Activated CD4-positive, alpha-beta memory T cell treated with anti-CD3 and anti-CD28 coated beads for 36 hours (primary cell): ENCODE measurements at regions of chr10 and their contacts with region 1.

Region 1: DNA sequence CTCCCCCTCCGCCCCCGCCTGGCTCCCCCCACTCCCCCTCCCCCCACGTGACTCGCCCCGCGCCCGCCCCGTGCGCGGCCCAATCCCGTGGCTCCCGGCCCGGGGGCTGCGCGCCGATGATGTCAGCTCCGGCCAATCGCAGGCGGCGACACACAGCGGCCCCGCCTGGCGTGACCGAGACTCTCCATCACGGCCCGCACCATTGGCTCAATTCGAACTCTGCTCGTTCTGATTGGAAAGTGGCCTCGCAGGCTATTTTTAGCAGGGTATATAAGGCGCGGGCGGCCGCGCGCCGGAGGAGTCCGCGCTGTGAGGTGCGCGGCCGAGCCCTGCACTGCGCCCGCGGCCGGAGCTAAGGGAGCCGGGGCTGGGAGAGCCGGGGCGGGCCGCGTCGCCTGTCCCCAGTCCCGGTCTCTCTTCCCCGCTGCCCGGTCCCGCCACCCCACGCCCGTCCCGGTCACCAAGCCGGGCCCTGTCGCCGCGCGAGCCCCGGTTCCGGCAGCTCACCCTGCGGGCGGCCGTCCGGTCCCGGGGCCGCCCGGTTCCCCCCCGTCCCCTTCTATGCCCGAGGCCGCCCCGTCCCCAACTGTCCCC is 345 bp upstream of the KLF6 start:
- DNase-seq: peak; percentile 100
- H3K4me3 Mint-ChIP-seq: peak overlapping the region; percentile 96
- H3K27ac Mint-ChIP-seq: peak overlapping the region; percentile 98
- H3K4me1 Mint-ChIP-seq: peaks cover 27% of the 10 kb centered on the region
- H3K27me3 Mint-ChIP-seq: peaks cover 2% of the 10 kb centered on the region

Region 2: DNA sequence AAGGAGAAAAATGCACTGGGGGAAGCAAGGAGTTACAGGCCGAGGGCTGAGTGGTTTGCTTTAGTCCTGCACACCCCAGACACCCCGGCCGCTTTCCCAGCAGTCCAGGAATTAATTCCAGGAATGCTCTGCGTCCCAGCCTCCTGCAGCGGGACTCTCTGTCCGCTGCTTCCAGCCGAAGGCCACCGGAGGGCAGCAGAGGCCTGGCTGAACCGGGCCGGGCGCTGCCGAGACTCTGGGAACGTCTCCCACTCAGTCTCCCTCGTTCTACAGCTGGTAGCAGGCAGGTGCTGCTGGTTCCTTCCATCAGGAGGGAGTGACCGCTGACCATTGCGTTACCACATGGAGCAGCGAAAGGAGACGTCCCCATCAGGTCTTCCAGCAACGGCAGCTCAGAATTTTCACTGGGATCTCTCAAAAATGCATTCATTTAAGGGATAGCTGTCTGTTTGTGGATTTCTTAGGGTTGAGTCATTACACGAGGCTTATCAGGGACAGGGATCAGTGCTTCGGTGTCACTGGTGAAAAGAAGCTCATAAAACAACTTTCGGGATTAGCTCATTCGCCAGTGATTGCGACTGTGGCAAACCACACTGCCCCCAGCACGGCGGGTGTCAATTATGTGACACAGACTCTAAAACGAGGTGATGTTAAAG is 587.9 kb before region 1 on chr10:
- CTCF ChIA-PET with region 1: interaction called, 8 read pairs
- POLR2A ChIA-PET with region 1: interaction called, 10 read pairs
- intact Hi-C with region 1: no loop called
- DNase-seq: peak; percentile 94
- H3K4me3 Mint-ChIP-seq: no peak overlapping the region
- H3K27ac Mint-ChIP-seq: no peak overlapping the region
- H3K4me1 Mint-ChIP-seq: peaks cover 11% of the 10 kb centered on the region
- H3K27me3 Mint-ChIP-seq: peaks cover 70% of the 10 kb centered on the region

Region 3: DNA sequence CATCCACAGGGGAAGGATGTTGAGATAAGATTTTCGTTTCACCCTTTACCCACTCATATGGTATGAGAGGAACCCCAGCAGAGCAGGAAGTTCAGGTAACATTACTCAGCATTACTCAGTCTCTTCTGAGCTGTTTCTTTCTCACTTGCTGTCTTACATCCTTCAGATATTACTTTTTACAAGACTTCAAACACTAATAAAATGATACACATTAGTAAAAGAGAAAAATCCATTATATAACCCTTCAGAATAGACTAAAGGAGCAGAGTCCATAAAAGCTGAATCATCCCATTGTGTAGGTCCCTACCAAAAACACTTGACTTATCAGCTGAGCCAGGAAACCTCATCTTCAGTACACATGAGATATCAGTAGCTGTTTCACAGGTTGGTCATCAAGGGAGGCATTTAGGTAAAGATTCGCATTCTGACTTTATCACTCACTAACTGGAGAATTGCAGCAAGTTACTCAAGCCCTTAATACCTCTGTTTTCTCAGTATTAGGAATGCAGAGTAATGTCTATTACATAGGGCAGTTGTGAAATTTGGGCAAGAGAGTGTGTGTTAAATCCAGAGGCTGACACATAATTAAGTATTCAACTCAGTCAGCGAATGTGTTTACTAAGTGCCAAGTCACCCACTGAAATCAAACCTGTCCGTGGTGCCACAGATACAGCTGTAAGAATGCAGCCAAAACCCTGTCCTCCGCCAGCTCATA is 45.0 kb before region 1 on chr10:
- CTCF ChIA-PET with region 1: interaction called, 4 read pairs
- POLR2A ChIA-PET with region 1: interaction called, 19 read pairs
- intact Hi-C with region 1: no loop called
- DNase-seq: peak; percentile 57
- H3K4me3 Mint-ChIP-seq: peak overlapping the region; percentile 43
- H3K27ac Mint-ChIP-seq: peak overlapping the region; percentile 82
- H3K4me1 Mint-ChIP-seq: peaks cover 28% of the 10 kb centered on the region
- H3K27me3 Mint-ChIP-seq: no peaks in the 10 kb centered on the region

Region 4: GRCh38 chr10:3828404-3829155 is 43.2 kb after region 1 on chr10:
- CTCF ChIA-PET with region 1: no interaction called
- POLR2A ChIA-PET with region 1: interaction called, 36 read pairs
- intact Hi-C with region 1: loop called (anchors 1 kb)
- DNase-seq: peak; percentile 70
- H3K4me3 Mint-ChIP-seq: peak overlapping the region; percentile 56
- H3K27ac Mint-ChIP-seq: peak overlapping the region; percentile 97
- H3K4me1 Mint-ChIP-seq: peaks cover 63% of the 10 kb centered on the region
- H3K27me3 Mint-ChIP-seq: no peaks in the 10 kb centered on the region

Region 5: GRCh38 chr10:3868271-3868664 is 82.9 kb after region 1 on chr10:
- CTCF ChIA-PET with region 1: interaction called, 3 read pairs
- POLR2A ChIA-PET with region 1: interaction called, 115 read pairs
- intact Hi-C with region 1: loop called (anchors 1 kb)
- DNase-seq: no peak
- H3K4me3 Mint-ChIP-seq: no peak overlapping the region
- H3K27ac Mint-ChIP-seq: peak overlapping the region; percentile 93
- H3K4me1 Mint-ChIP-seq: peaks cover 76% of the 10 kb centered on the region
- H3K27me3 Mint-ChIP-seq: no peaks in the 10 kb centered on the region

Region 6: DNA sequence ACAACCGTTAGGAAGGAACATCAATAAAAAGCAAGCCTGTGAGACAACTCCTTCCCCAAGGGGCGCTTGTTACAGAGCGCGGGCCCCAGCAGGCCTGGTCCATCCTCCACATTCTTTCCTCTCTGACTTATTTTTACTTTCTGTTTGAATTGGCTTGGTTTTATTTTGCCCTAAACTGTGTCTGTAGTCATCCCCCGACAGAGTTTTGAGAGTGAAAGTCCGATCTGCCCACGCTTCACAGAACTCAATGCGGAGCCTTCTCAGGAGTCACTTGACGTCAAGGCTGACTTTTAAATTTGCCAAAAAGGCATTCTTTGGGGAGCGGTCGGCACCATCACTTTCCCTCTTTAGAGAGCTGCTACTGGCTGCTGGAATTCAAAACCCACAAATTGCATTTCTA is 149.8 kb after region 1 on chr10:
- CTCF ChIA-PET with region 1: no interaction called
- POLR2A ChIA-PET with region 1: interaction called, 32 read pairs
- intact Hi-C with region 1: no loop called
- DNase-seq: peak; percentile 95
- H3K4me3 Mint-ChIP-seq: peak overlapping the region; percentile 42
- H3K27ac Mint-ChIP-seq: peak overlapping the region; percentile 92
- H3K4me1 Mint-ChIP-seq: peaks cover 49% of the 10 kb centered on the region
- H3K27me3 Mint-ChIP-seq: no peaks in the 10 kb centered on the region

Region 7: DNA sequence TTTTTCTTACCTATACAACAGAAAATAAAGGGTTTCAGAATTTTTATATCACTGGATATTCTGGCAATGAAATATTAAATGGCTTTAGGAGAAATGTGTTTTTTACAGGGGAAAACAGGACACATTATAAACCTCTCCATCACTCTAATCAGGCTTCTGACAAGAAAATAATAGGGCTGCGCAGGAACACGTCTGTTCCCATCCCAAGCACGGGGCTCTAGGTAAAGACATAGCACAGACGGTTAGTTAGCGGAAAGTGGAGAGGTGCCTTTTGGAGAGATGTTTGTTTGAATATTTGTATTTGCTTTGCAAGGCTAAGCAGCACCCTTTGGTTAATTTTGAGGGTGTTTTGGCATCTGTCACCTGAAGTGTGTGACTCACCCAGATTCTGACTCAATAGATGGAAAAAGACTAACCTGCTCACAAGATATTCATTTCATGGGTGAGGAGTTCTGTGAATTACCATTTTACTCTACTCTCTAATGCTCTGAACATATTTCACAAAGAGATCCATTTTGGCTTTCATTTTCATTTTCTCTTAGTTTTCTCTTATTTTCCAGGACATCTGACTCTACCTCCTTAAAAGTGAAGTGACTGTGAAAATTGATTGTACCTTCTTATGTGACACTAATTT is 866.2 kb after region 1 on chr10:
- CTCF ChIA-PET with region 1: interaction called, 4 read pairs
- POLR2A ChIA-PET with region 1: interaction called, 8 read pairs
- intact Hi-C with region 1: loop called (anchors 1 kb)
- DNase-seq: peak; percentile 34
- H3K4me3 Mint-ChIP-seq: peak overlapping the region; percentile 62
- H3K27ac Mint-ChIP-seq: peak overlapping the region; percentile 96
- H3K4me1 Mint-ChIP-seq: peaks cover 32% of the 10 kb centered on the region
- H3K27me3 Mint-ChIP-seq: no peaks in the 10 kb centered on the region